AG04450 (cell line): ENCODE measurements at regions of chr1 and their contacts with region 1.

Region 1: DNA sequence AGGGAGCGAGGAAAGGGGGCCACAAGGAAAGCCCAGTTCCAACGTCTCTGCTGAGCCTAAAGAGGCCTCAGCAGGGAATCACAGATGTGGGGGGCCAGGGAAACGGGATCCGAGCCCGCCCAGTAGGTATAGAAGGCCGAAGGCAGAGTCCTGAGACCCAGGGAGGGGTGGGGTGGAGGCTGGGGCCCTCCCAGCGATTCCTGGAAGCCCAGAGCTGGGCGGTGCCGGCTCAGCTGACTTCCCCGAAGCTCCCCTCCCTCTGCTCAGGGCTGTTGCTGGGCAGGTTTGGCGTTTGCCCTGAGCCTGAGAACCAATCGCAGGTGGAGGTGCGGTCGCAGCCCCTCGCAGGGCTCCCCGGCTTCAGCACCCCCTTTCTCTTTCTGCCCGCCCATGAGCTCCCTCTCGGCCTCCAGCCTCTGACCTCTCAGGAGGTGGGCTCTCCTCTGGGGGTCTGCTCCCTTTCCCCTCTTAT is 12.8 kb downstream of the ADAMTSL4 start:
- DNase-seq: peak; percentile 81
- H3K4me3 ChIP-seq: peak overlapping the region; percentile 67
- H3K27ac ChIP-seq: peak overlapping the region; percentile 100
- H3K27me3 ChIP-seq: no peaks in the 10 kb centered on the region
- CTCF ChIP-seq: no peak

Region 2: GRCh38 chr1:150387200-150387599 is 174.8 kb before region 1 on chr1:
- CTCF ChIA-PET with region 1: no interaction called
- POLR2A ChIA-PET with region 1: no interaction called
- DNase-seq: no peak
- H3K4me3 ChIP-seq: no peak overlapping the region
- H3K27ac ChIP-seq: no peak overlapping the region
- H3K27me3 ChIP-seq: no peaks in the 10 kb centered on the region
- CTCF ChIP-seq: no peak

Region 3: DNA sequence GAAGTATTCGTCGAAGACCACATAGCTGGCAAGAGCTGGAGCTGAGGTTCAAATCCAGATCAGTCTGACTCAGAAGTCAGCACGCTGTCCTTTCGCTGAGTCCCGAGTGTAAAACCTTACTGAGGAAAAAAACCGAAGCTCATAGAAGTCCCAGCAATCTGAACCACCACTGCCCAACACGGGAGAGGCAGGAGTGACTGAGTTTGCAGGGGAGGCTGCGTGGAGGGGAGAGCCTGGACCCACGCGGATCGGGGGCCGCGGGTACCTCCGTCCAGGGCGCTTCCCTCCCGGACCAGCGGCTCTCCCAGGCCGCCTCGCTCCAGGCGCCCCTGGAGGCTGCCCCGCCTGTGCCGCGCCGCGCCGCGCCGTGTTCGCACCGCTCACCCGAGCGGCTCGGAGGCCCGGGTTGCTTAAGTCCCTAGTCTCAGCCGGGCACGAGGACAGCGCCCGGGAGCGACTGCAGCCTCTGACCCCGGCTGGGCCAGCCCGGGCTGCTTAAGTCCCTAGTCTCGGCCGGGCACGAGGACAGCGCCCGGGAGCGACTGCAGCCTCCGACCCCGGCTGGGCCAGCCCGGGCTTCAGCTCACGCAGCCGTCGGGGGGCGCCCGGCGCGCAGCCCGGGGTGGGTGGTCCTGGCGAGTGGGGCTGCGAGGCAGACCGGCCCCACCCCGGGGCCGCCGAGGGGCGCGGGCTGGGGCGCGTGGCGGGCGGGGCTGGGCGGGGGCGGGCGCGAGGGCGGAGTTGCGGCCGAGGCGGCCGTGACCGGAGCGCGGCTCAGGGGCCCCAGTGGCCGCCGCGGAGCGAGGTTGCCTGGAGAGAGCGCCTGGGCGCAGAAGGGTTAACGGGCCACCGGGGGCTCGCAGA is 13.1 kb before region 1 on chr1 and contains the start of gene ADAMTSL4:
- CTCF ChIA-PET with region 1: interaction called, 64 read pairs
- POLR2A ChIA-PET with region 1: interaction called, 4 read pairs
- DNase-seq: no peak
- H3K4me3 ChIP-seq: peak within 1 kb of the TSS; percentile 64
- H3K27ac ChIP-seq: peak within 1 kb of the TSS; percentile 61
- H3K27me3 ChIP-seq: no peaks in the 10 kb centered on the region
- CTCF ChIP-seq: 0 out of 2 replicates have a peak, but pooled peaks have one; percentile 10
- polyA plus RNA-seq, gene ADAMTSL4: 4.2 and 4.9 TPM in 2 replicates

Region 4: DNA sequence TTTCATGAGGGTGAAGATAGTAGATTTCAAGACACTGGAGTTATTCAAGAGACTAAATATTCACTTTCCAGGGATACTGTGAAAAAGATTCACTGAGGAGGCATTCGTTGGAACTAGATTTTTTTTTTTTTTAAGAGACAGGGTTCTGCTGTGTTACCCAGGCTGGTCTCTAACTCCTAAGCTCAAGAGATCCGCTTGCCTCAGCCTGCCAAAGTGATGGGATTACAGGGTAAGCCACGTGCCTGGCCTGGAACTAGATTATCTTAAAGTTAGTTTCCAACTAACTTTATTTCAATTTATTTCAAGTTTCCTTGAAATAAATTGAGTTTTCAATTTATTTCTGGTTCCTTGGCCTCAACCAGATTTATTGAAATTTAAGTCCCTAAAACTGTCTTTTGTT is 41.7 kb after region 1 on chr1:
- CTCF ChIA-PET with region 1: interaction called, 15 read pairs
- POLR2A ChIA-PET with region 1: no interaction called
- DNase-seq: no peak
- H3K4me3 ChIP-seq: no peak overlapping the region
- H3K27ac ChIP-seq: peak overlapping the region; percentile 59
- H3K27me3 ChIP-seq: no peaks in the 10 kb centered on the region
- CTCF ChIP-seq: no peak

Region 5: DNA sequence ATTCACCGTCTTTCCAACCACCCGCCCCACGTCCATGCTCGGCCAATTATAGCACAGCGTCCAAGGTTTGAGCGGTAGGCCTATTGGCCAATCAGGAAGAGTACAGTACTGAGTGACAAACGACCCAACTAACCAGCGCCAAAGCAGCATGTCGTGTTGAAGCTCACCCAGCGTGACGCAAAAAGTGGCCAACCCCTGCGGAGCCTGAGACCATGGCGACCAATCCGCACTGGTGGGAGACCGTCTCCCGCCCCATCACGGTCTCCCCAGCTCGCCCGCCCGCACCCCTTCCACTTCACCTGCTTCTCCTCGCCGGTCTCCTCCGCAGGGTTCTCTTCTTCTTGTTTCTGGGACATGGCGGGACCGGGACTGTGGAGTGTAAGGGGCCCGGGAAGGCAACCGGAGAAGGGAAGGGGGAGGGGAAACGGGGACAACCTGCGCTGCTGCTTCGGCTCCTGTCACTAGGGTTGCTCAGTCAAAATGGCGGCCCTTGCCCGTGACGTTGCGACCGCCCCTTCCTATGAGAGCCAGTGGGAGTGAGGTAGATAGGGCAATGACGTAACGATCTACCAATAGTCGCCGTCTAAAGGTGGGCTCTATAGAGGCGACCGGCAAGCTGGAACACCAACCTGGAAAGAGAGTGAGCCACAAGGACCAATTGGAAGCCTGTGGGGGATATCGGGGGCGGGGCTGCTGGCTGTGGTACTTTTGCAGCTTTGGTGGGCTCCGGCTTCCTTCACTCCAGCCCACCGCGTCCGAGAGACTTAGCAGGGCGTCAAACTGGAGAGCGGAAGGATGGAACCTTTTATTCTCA is 67.3 kb after region 1 on chr1 and contains the start of gene ENSA:
- CTCF ChIA-PET with region 1: interaction called, 104 read pairs
- POLR2A ChIA-PET with region 1: interaction called, 6 read pairs
- DNase-seq: peak; percentile 99
- H3K4me3 ChIP-seq: peak within 1 kb of the TSS; percentile 78
- H3K27ac ChIP-seq: peak within 1 kb of the TSS; percentile 89
- H3K27me3 ChIP-seq: no peaks in the 10 kb centered on the region
- CTCF ChIP-seq: no peak
- polyA plus RNA-seq, gene ENSA: 40.7 and 53.7 TPM in 2 replicates

Region 6: GRCh38 chr1:150813058-150813707 is 251.2 kb after region 1 on chr1:
- CTCF ChIA-PET with region 1: interaction called, 20 read pairs
- POLR2A ChIA-PET with region 1: interaction called, 5 read pairs
- DNase-seq: peak; percentile 57
- H3K4me3 ChIP-seq: no peak overlapping the region
- H3K27ac ChIP-seq: no peak overlapping the region
- H3K27me3 ChIP-seq: no peaks in the 10 kb centered on the region
- CTCF ChIP-seq: peak; percentile 93